Activated naive CD4-positive, alpha-beta T cell treated with anti-CD3 and anti-CD28 coated beads for 36 hours (primary cell): ENCODE measurements at regions of chr6 and their contacts with region 1.

Region 1: DNA sequence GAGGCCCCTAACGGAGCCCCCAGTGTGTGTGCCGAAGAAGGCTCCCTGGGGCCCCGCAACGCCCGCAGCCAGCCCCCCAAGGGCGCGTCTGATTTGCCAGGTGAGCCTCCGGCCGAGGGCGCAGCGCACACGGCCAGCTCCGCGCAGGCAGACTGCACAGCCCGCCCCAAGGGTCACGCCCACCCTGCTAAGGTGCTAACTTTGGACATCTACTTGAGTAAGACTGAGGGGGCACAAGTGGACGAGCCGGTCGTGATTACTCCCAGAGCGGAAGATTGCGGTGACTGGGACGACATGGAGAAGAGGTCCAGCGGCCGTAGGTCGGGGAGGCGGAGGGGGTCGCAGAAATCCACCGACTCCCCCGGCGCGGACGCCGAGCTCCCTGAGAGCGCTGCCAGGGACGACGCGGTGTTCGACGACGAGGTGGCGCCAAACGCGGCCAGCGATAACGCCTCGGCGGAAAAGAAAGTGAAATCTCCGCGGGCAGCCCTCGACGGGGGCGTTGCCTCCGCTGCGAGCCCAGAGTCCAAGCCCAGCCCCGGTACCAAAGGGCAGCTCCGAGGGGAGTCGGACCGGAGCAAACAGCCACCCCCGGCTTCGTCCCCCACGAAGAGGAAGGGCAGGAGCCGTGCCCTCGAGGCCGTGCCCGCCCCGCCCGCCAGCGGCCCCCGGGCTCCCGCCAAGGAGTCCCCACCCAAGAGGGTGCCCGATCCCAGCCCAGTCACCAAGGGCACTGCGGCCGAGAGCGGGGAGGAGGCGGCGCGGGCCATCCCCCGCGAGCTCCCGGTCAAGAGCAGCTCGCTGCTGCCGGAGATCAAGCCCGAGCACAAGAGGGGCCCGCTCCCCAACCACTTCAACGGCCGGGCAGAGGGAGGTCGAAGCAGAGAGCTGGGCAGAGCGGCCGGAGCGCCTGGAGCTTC is 117.0 kb downstream of the RTN4IP1 start:
- DNase-seq: peak; percentile 81
- H3K4me3 Mint-ChIP-seq: peak overlapping the region; percentile 89
- H3K27ac Mint-ChIP-seq: peak overlapping the region; percentile 87
- H3K4me1 Mint-ChIP-seq: peaks cover 49% of the 10 kb centered on the region
- H3K27me3 Mint-ChIP-seq: peaks cover 4% of the 10 kb centered on the region

Region 2: DNA sequence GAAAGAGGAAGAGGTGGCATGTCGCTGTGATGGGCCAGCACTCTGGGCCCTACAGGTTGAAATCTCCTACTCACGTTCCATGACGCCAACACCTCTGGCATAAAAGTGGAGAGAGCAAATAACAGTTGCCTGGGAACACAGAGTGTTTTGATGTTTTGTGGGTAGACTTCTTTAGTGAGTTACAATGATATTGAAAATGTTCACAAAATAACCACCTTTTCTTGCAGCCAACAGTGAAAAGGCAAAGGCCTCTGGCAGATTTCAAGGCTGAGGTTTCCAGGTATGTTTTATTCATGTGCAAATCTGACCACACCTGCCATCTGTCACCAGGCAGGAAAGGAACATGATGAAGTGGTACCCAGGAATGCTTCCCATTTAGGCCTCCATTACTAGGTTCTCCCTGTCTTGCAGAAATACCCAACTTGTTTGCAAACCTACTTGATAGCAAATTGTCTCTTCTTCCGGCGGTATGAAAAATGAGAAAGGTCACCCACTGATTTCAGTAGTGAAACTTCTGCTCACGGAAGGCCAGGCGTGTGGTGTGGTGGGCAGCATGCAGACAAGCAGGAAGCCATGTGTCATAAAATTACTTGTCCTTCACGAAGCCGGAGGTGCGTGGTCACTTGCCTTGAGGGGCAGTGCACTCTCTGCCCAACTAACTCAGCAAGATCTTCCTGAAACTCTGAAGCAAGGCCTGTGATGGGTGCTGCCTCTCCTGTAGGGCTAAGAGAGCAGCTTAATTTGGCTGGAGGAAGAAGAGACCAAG is 725.2 kb before region 1 on chr6:
- CTCF ChIA-PET with region 1: no interaction called
- intact Hi-C with region 1: loop called (anchors 10 kb)
- DNase-seq: no peak
- H3K4me3 Mint-ChIP-seq: no peak overlapping the region
- H3K27ac Mint-ChIP-seq: no peak overlapping the region
- H3K4me1 Mint-ChIP-seq: peaks cover 25% of the 10 kb centered on the region
- H3K27me3 Mint-ChIP-seq: peaks cover 7% of the 10 kb centered on the region

Region 3: GRCh38 chr6:106360410-106360988 is 151.8 kb before region 1 on chr6 and contains the start of gene CRYBG1:
- CTCF ChIA-PET with region 1: interaction called, 3 read pairs
- intact Hi-C with region 1: loop called (anchors 2 kb)
- DNase-seq: peak; percentile 78
- H3K4me3 Mint-ChIP-seq: peak within 1 kb of the TSS; percentile 71
- H3K27ac Mint-ChIP-seq: no peak within 1 kb of the TSS
- H3K4me1 Mint-ChIP-seq: peaks cover 9% of the 10 kb centered on the region
- H3K27me3 Mint-ChIP-seq: peaks cover 40% of the 10 kb centered on the region
- total RNA-seq, gene CRYBG1: 12.9 to 13.0 TPM

Region 4: GRCh38 chr6:106477790-106478189 is 34.5 kb before region 1 on chr6:
- CTCF ChIA-PET with region 1: interaction called, 3 read pairs
- intact Hi-C with region 1: loop called (anchors 2 kb)
- DNase-seq: no peak
- H3K4me3 Mint-ChIP-seq: no peak overlapping the region
- H3K27ac Mint-ChIP-seq: no peak overlapping the region
- H3K4me1 Mint-ChIP-seq: peaks cover 11% of the 10 kb centered on the region
- H3K27me3 Mint-ChIP-seq: no peaks in the 10 kb centered on the region

Region 5: GRCh38 chr6:106539936-106540335 is 27.6 kb after region 1 on chr6:
- CTCF ChIA-PET with region 1: interaction called, 25 read pairs
- intact Hi-C with region 1: no loop called
- DNase-seq: no peak
- H3K4me3 Mint-ChIP-seq: no peak overlapping the region
- H3K27ac Mint-ChIP-seq: peak overlapping the region; percentile 11
- H3K4me1 Mint-ChIP-seq: peaks cover 40% of the 10 kb centered on the region
- H3K27me3 Mint-ChIP-seq: no peaks in the 10 kb centered on the region

Region 6: GRCh38 chr6:106556368-106556960 is 44.2 kb after region 1 on chr6:
- CTCF ChIA-PET with region 1: interaction called, 13 read pairs
- intact Hi-C with region 1: loop called (anchors 1 kb)
- DNase-seq: no peak
- H3K4me3 Mint-ChIP-seq: no peak overlapping the region
- H3K27ac Mint-ChIP-seq: no peak overlapping the region
- H3K4me1 Mint-ChIP-seq: peaks cover 18% of the 10 kb centered on the region
- H3K27me3 Mint-ChIP-seq: no peaks in the 10 kb centered on the region

Region 7: GRCh38 chr6:107957909-107958688 is 1445.8 kb after region 1 on chr6 and contains the start of gene SEC63:
- CTCF ChIA-PET with region 1: no interaction called
- intact Hi-C with region 1: loop called (anchors 10 kb)
- DNase-seq: peak; percentile 98
- H3K4me3 Mint-ChIP-seq: peak within 1 kb of the TSS; percentile 97
- H3K27ac Mint-ChIP-seq: peak within 1 kb of the TSS; percentile 94
- H3K4me1 Mint-ChIP-seq: peaks cover 32% of the 10 kb centered on the region
- H3K27me3 Mint-ChIP-seq: no peaks in the 10 kb centered on the region
- total RNA-seq, gene SEC63: 78.3 to 86.5 TPM